PC-9 (cell line): ENCODE measurements at regions of chr2 and their contacts with region 1.

Region 1: GRCh38 chr2:71426721-71427120 is 26.6 kb upstream of the DYSF start:
- DNase-seq: no peak
- H3K4me3 ChIP-seq: no peak overlapping the region
- H3K27ac ChIP-seq: no peak overlapping the region
- H3K4me1 ChIP-seq: peaks cover 10% of the 10 kb centered on the region; the same call in 1 of the 2 replicates
- H3K27me3 ChIP-seq: no peaks in the 10 kb centered on the region
- CTCF ChIP-seq: no peak

Region 2: GRCh38 chr2:71173096-71173495 is 253.6 kb before region 1 on chr2:
- CTCF ChIA-PET with region 1: no interaction called
- POLR2A ChIA-PET with region 1: no interaction called
- intact Hi-C with region 1: no loop called
- DNase-seq: no peak
- H3K4me3 ChIP-seq: no peak overlapping the region
- H3K27ac ChIP-seq: no peak overlapping the region
- H3K4me1 ChIP-seq: no peaks in the 10 kb centered on the region
- H3K27me3 ChIP-seq: no peaks in the 10 kb centered on the region; the same call in 1 of the 2 replicates
- CTCF ChIP-seq: no peak

Region 3: GRCh38 chr2:71410696-71411095 is 16.0 kb before region 1 on chr2:
- CTCF ChIA-PET with region 1: no interaction called
- POLR2A ChIA-PET with region 1: no interaction called
- intact Hi-C with region 1: loop called (anchors 1 kb)
- DNase-seq: no peak
- H3K4me3 ChIP-seq: no peak overlapping the region
- H3K27ac ChIP-seq: no peak overlapping the region
- H3K4me1 ChIP-seq: no peaks in the 10 kb centered on the region
- H3K27me3 ChIP-seq: no peaks in the 10 kb centered on the region
- CTCF ChIP-seq: no peak